ENCODE measurements at regions of chr18 and their contacts with region 1.

Region 1: GRCh38 chr18:63422087-63422809 is at the start of gene VPS4B:
- DNase-seq: peak; percentile 99 to 100 (median 100)
- ATAC-seq: peak; percentile 99 to 100 (median 99)
- H3K4me3 ChIP-seq: peak within 1 kb of the TSS; percentile 54 to 99 (median 84)
- H3K27ac ChIP-seq: peak within 1 kb of the TSS; percentile 86 to 98 (median 96)
- H3K4me1 ChIP-seq: peaks cover 0 to 41% (median 19%) of the 10 kb centered on the region in 12 donors
- H3K27me3 ChIP-seq: no peaks in the 10 kb centered on the region
- CTCF ChIP-seq: no peak
- POLR2A ChIP-seq: peak; percentile 37 to 88
- total RNA-seq, gene VPS4B: 13.5 to 40.0 (median 19.9) TPM

Region 2: GRCh38 chr18:63119647-63120046 is 302.6 kb before region 1 on chr18:
- intact Hi-C with region 1: loop called in 1 of 10 experiments (anchors 10 kb)
- DNase-seq: peak in 2 of 5 donors; percentile 33 to 37
- ATAC-seq: peak in 3 of 4 donors; percentile 55 to 68 (median 64)
- H3K4me3 ChIP-seq: no peak overlapping the region
- H3K27ac ChIP-seq: no peak overlapping the region
- H3K4me1 ChIP-seq: peaks cover 0 to 14% (median 4%) of the 10 kb centered on the region in 12 donors
- H3K27me3 ChIP-seq: no peaks in the 10 kb centered on the region
- CTCF ChIP-seq: peak; percentile 11 to 67 (median 49)
- POLR2A ChIP-seq: no peak

Region 3: DNA sequence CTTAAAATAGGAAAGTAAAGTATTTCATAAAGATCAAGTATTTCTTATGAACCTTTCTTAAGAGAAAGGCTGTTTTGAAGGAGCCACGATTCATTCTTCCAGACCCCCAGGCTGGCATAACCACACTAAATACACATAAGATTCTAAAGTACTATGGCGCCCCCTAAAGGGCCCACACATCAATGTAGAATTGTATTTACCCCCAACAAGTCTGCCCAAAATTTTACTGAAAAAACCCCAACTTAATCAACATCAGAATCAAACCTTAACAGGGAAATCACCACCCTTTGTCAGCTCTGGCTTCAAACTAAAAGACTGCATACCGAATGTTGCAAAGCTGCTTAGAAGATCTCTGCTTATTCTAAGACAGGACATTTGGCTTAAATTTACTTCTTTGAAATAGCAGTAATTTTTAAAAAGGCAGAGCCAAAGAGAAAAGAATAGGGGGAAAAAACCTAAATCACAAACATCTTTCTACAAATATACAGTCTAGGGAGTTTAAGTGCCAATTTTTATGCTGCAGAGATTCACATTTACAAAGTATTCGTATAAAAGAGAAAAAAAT is 82.2 kb before region 1 on chr18:
- intact Hi-C with region 1: loop called in 1 of 10 experiments (anchors 5 kb)
- DNase-seq: no peak
- ATAC-seq: no peak
- H3K4me3 ChIP-seq: no peak overlapping the region
- H3K27ac ChIP-seq: no peak overlapping the region
- H3K4me1 ChIP-seq: peaks cover 0 to 9% (median 0%) of the 10 kb centered on the region in 12 donors
- H3K27me3 ChIP-seq: no peaks in the 10 kb centered on the region
- CTCF ChIP-seq: peak; percentile 36 to 64 (median 47)
- POLR2A ChIP-seq: no peak

Region 4: DNA sequence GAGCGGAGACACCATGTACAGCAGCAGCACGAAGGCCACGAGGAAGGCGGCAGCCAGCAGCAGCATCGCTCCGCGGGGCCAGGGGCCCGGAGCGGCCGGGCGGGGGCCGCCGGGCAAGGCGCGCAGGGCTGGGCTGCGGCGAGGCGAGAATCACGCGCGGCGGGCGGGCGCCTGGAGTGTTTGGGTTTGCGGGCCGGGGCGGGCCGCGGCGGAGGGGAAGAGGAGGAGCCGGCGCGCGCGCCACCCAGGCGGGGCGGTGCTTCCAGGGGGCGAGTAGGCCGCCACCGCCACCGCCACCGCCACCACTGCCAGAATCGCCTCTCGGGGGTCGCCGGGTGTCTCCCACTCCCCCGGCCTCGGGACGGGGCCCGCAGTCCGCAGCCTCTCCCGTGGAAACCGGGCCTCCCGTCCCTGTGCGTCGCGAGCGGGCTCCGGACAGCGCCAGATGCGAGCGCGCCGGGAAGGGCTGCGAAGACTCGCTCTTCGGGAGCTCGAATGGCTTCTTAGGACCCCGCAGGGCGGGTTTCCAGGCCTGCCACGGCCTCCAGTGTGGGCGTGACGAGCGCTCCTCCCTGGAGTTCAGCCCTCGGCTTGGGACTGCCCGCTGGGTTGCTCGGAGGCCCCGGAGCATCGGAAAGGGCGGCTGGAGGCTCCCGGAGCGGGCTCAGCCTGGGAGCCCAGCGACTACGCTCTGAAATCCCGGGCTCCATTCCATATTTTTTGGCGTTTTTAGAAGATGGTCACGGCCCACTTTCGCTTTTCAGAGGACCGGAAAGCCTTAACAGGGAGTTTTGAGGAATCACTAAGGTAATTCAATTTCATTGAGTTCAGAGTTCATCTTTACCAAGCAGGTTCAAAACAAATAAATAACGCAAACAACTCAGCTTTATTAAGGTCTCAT is 54.9 kb before region 1 on chr18 and contains the start of gene KDSR:
- intact Hi-C with region 1: loop called in 9 of 10 experiments (anchors 1 to 10 kb)
- DNase-seq: peak; percentile 96 to 98 (median 97)
- ATAC-seq: peak; percentile 97 to 99 (median 98)
- H3K4me3 ChIP-seq: peak within 1 kb of the TSS; percentile 77 to 98 (median 92)
- H3K27ac ChIP-seq: peak within 1 kb of the TSS; percentile 88 to 100 (median 98)
- H3K4me1 ChIP-seq: peaks cover 0 to 30% (median 16%) of the 10 kb centered on the region in 12 donors
- H3K27me3 ChIP-seq: no peaks in the 10 kb centered on the region
- CTCF ChIP-seq: peak in 2 of 12 donors; percentile 15
- POLR2A ChIP-seq: peak in 1 of 2 donors; percentile 77
- total RNA-seq, gene KDSR: 26.3 to 45.6 (median 41.4) TPM